AG04449 (cell line): ENCODE measurements at regions of chr7 and their contacts with region 1.

Region 1: GRCh38 chr7:47435889-47436312 is 146.0 kb downstream of the TNS3 start:
- DNase-seq: peak; percentile 59
- H3K4me3 ChIP-seq: no peak overlapping the region
- CTCF ChIP-seq: peak; percentile 75

Region 2: DNA sequence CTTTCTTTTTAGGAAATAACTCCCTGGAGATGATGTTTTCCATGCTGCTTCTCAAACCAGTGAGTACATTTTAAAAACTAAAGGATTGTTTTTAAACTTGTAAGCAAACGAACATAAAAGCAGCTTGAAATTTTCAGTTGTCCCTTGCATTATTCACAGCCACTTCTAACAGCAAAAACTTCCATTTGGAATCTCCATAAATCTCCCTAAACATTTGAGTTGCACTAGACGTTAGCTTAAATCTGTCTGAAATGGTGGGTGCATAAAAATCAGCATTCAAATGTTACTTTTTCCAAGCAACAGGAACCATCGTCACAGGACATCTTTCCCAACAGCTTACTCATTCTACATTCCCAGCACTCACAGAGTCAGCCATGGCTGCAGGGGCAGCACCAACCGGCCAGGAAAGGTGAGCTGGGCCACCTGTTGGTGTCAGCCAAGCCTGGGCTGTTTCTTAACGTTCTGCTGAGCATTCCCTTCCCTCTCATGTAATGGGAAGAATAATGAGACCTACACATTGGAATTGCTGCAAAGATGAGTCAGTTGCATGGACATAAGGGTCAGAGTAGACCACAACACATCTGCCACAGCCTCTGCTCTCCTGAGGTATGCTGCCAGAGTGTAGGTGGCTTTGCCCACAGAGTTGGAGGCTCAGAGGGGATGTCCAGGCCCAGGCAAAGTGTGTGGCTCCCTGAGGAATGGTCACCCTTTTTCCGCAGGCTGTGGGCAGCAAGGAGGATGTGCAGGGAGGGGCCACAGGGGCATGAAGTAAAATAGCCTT is 17.1 kb before region 1 on chr7:
- CTCF ChIA-PET with region 1: interaction called, 10 read pairs
- POLR2A ChIA-PET with region 1: no interaction called
- DNase-seq: no peak
- H3K4me3 ChIP-seq: no peak overlapping the region
- CTCF ChIP-seq: no peak

Region 3: GRCh38 chr7:47536661-47537611 is 101.0 kb after region 1 on chr7:
- CTCF ChIA-PET with region 1: interaction called, 10 read pairs
- POLR2A ChIA-PET with region 1: no interaction called
- DNase-seq: no peak
- H3K4me3 ChIP-seq: peak overlapping the region; percentile 73
- CTCF ChIP-seq: no peak

Region 4: DNA sequence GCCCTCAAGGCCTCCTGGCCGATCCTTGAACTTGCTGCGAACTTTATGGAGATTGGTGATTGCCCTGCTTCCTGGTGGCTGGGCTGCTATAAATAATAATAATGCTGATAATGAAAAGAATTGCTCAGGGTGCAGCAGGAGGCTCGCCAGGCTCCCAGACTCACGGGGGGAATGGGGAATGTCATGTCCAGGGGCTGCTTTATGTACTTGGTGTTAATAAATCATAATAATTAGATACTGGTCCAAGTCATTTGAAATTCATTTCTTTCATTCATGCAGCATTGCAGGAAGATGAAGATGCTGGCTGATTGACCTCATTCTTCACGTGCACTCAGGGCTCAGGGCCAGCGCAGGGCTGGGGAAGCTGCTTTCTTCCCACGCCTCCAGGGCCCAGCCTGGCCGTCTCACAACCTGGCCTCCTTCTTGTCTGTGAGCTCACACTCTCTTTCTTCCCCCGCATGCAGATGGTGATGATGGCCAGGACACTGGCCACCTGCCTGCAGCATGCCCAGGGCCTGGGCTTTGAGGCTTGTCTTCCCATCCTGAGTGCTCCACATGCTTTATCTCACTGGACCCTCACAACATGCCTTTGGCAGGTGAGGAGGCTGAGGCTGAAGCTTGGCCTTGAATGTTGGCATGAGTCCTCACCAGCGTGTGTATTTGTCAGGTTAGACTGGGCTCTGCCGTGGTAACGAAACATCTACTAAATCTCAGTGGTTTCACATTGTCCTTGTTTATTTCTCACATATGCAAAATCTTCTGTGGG is 284.4 kb after region 1 on chr7:
- CTCF ChIA-PET with region 1: no interaction called
- POLR2A ChIA-PET with region 1: no interaction called
- DNase-seq: no peak
- H3K4me3 ChIP-seq: no peak overlapping the region
- CTCF ChIP-seq: no peak

Region 5: GRCh38 chr7:47806701-47807103 is 370.8 kb after region 1 on chr7:
- CTCF ChIA-PET with region 1: interaction called, 12 read pairs
- POLR2A ChIA-PET with region 1: no interaction called
- DNase-seq: no peak
- H3K4me3 ChIP-seq: no peak overlapping the region
- CTCF ChIP-seq: no peak

Region 6: GRCh38 chr7:47827351-47827756 is 391.5 kb after region 1 on chr7:
- CTCF ChIA-PET with region 1: interaction called, 10 read pairs
- POLR2A ChIA-PET with region 1: no interaction called
- DNase-seq: no peak
- H3K4me3 ChIP-seq: no peak overlapping the region
- CTCF ChIP-seq: no peak